Posterior vena cava (tissue), 2 donors: ENCODE measurements at regions of chr6 and their contacts with region 1.

Region 1: DNA sequence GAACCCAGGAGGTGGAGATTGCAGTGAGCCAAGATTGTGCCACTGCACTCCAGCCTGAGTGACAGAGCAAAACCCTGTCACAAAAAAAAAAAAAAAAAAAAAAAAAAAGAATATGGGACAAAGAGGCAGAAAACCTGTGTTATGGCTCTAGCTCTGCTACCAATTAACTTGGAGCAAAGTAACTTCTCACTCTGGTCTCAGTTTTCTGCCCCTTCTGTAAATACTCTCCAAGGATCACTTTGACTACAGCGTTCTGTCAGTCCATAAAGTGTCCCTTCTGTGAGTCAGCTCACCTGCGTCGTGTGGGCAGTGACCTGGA is 24.6 kb downstream of the C6orf132 start:
- DNase-seq: no peak

Region 2: GRCh38 chr6:40227735-40228134 is 1890.1 kb before region 1 on chr6:
- intact Hi-C with region 1: no loop called
- DNase-seq: no peak

Region 3: DNA sequence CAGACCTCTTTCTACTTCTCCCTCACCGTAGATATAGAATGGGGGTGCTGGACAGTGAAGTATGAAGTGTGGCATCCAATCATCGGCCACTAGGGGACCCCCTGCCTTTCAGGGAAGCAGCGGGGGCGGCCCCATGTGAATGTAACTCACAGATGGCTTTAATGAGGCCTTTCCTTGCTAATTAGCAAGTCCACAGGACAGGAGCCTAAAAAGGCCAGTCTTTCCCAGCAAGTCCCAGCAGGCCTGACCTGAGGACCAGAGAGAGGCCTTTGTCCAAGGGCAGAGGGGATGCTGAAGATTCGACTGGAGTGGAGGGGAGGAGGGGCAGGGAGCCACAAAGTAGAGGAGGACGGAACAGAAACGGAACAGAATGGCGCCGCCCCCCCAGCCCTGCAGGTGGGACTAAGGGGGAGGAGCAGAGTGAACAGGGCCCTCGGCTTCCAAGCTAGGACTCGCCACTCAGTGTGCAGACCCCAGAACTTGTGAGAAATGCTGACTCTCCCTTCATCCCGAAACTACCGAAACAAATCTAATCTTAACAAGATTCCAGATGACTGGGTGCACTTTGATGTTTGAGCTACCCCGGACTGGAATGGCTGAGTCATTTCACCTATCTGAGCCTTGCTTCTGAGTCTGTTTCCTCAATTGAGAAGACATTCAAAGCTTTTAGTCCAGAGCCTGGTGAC is 18.8 kb after region 1 on chr6:
- intact Hi-C with region 1: loop called in 1 of 2 experiments (anchors 1 kb)
- DNase-seq: no peak